Activated T-helper 2 cell treated with anti-CD3 and anti-CD28 coated beads, Interferon-gamma antibody, Interleukin-2, Interleukin-4, amounts not matched to agents 10 μg/mL and 5 μg/mL and 100 μg/mL, durations not matched to agents 14 hours and 24 hours and 36 hours (primary cell): ENCODE measurements at regions of chr2 and their contacts with region 1.

Region 1: DNA sequence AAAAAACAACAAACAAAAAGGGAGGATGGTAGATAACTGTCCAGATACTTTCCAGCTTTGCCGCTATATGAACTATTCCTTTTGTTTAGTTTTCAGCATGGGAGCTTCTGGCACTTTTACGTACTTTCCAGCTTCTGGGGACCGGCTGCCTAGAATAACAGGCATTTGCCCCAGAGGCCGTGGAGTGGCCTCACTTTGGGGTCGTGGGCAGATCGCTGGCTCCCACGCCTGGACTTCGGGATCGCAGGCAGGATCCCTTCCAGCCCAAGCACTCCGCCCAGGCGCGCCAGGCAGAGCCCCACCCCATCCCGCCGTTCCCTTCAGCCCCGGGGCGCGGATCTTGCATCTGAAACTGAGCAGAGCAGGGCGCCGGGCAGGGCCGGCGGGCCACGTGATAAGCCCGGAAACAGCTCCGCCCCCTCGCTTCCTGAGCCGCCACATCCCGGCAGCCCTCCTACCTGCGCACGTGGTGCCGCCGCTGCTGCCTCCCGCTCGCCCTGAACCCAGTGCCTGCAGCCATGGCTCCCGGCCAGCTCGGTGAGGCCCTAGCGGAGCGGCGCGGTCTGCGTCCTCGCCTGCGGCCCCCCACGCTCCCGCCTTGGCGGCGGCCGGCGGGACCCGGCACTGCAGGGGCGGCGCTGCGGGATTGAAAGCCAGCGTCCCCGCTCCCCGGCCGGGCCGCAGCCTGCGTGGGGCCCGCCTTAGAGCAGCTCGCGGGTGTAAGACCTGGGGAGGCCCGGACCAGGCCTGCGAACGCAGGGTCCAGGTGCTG is at the start of gene ATIC:
- DNase-seq: peak; percentile 91
- H3K4me3 Mint-ChIP-seq: peak within 1 kb of the TSS; percentile 96
- H3K27ac Mint-ChIP-seq: peak within 1 kb of the TSS; percentile 93
- H3K4me1 Mint-ChIP-seq: peaks cover 30% of the 10 kb centered on the region
- H3K27me3 Mint-ChIP-seq: peaks cover 4% of the 10 kb centered on the region
- total RNA-seq, gene ATIC: 284 and 296 TPM in 2 replicates

Region 2: GRCh38 chr2:215136669-215137328 is 175.0 kb before region 1 on chr2:
- intact Hi-C with region 1: no loop called
- DNase-seq: no peak
- H3K4me3 Mint-ChIP-seq: no peak overlapping the region
- H3K27ac Mint-ChIP-seq: peak overlapping the region; percentile 13
- H3K4me1 Mint-ChIP-seq: peaks cover 3% of the 10 kb centered on the region
- H3K27me3 Mint-ChIP-seq: no peaks in the 10 kb centered on the region

Region 3: GRCh38 chr2:215207791-215208367 is 103.9 kb before region 1 on chr2:
- intact Hi-C with region 1: no loop called
- DNase-seq: no peak
- H3K4me3 Mint-ChIP-seq: no peak overlapping the region
- H3K27ac Mint-ChIP-seq: no peak overlapping the region
- H3K4me1 Mint-ChIP-seq: no peaks in the 10 kb centered on the region
- H3K27me3 Mint-ChIP-seq: no peaks in the 10 kb centered on the region

Region 4: DNA sequence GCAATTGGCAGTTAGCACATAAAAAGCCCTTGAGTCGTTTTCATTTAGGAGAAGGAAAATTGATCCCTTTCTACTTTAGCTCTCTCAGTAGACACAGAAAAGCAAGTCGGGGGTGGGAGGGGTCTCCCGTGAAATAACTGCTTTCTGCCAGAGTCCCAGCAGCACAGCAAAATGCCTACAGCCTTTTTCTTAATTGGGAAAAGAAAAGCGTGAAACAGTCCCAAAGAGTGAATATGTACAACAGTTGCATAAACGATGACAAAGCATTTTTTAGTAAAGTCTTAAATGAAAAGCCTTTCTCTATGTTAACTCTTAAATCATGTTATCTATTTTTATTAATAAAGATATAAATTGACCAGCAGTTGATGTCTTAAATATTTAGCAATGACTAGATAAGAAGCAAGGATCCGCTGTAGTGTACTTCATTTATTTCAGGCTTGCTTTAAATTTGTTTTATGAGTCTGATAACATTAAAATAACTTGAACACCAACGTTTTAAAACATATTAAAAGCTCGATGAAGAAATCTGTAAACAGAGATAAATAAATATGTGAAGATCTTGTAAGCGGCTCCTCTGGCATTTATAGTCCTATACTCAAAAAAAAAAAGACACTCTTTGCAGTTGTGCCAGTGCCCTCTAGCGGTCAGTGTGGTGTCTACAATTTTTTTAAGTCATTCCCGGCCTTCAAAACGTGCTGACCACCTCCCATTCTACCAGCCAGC is 42.3 kb before region 1 on chr2:
- intact Hi-C with region 1: loop called (anchors 2 kb)
- DNase-seq: peak; percentile 16
- H3K4me3 Mint-ChIP-seq: no peak overlapping the region
- H3K27ac Mint-ChIP-seq: no peak overlapping the region
- H3K4me1 Mint-ChIP-seq: peaks cover 11% of the 10 kb centered on the region
- H3K27me3 Mint-ChIP-seq: no peaks in the 10 kb centered on the region

Region 5: DNA sequence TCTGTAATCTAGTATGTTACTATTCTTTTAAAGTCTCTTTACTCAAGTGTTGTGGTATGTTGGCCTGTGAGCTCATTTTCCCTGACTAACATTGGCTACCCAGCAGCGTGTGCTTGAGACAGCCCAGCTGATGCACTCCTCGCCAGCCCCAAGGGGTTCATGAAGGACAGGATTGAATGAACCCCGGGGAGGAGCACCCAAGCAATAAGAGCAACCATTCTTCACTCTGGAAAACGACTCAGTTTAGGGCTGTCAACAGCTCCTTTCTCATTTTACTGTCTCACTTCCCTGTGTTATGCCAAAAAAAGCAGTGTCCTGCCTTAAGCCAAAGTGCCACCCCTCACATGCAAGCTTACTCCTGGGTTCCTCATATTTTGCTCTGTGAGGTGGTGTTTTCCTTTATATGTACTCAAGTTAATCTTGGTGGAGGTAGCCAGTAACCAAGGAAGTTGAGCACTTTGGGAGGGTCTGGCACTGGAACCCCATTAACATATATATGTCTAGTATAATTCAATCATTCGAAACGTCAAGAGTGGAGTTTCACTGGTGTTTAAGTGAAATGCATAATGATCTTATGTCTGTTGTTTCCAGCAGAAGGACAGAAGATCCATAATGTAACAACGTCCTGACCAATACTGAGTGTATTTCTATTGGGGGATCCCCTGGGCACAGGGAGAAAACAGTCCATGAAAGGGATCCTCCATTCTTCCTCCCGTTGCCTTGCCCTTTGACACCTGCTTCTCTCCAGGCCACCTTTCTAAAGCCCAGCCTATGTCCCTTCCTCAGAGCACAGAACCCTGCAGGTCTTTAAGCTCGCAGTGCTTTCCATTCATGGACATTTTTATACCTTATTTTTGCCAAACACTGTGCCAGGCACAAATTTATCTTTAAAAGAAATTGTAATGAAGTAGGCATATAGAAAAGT is 43.2 kb after region 1 on chr2:
- intact Hi-C with region 1: loop called (anchors 5 kb)
- DNase-seq: no peak
- H3K4me3 Mint-ChIP-seq: no peak overlapping the region
- H3K27ac Mint-ChIP-seq: no peak overlapping the region
- H3K4me1 Mint-ChIP-seq: no peaks in the 10 kb centered on the region
- H3K27me3 Mint-ChIP-seq: no peaks in the 10 kb centered on the region

Region 6: GRCh38 chr2:215435809-215436704 is 124.2 kb after region 1 on chr2 and contains the start of gene FN1:
- intact Hi-C with region 1: loop called (anchors 10 kb)
- DNase-seq: peak; percentile 62
- H3K4me3 Mint-ChIP-seq: peak within 1 kb of the TSS; percentile 80
- H3K27ac Mint-ChIP-seq: peak within 1 kb of the TSS; percentile 17
- H3K4me1 Mint-ChIP-seq: peaks cover 15% of the 10 kb centered on the region
- H3K27me3 Mint-ChIP-seq: peaks cover 70% of the 10 kb centered on the region
- total RNA-seq, gene FN1: 4.5 and 6.3 TPM in 2 replicates

Region 7: DNA sequence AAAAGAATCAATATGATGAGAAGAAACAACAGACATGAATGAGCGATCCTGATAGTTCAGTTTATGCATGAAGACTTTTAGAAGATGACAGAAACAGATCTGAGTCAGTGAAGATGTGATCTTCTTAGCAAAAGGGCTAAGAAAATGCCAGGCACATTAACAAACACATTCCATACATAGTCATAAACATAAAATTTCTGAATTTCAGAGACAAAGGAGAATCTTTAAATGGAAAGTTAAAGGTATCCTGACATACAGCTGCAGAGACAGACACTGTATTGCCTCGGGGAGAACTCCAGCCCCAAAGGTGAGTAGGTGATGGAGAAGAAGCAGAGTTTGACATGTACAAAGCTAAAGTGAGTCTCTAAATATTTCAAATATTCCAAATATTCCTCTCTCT is 164.6 kb after region 1 on chr2:
- intact Hi-C with region 1: no loop called
- DNase-seq: no peak
- H3K4me3 Mint-ChIP-seq: no peak overlapping the region
- H3K27ac Mint-ChIP-seq: no peak overlapping the region
- H3K4me1 Mint-ChIP-seq: no peaks in the 10 kb centered on the region
- H3K27me3 Mint-ChIP-seq: peaks cover 6% of the 10 kb centered on the region